ENCODE measurements at regions of chr6 and their contacts with region 1.

Region 1: GRCh38 chr6:31769684-31770371 is 7.3 kb downstream of the VWA7 start:
- DNase-seq: peak; percentile 88
- ATAC-seq: peak; percentile 88
- H3K4me3 Mint-ChIP-seq: no peak overlapping the region
- H3K27ac Mint-ChIP-seq: peak overlapping the region; percentile 60
- H3K4me1 Mint-ChIP-seq: peaks cover 49% of the 10 kb centered on the region
- H3K27me3 Mint-ChIP-seq: no peaks in the 10 kb centered on the region

Region 2: GRCh38 chr6:31729515-31729978 is 40.3 kb before region 1 on chr6:
- CTCF ChIA-PET with region 1: interaction called, 118 read pairs
- POLR2A ChIA-PET with region 1: interaction called, 5 read pairs
- DNase-seq: peak; percentile 88
- ATAC-seq: peak; percentile 67
- H3K4me3 Mint-ChIP-seq: peak overlapping the region; percentile 95
- H3K27ac Mint-ChIP-seq: peak overlapping the region; percentile 90
- H3K4me1 Mint-ChIP-seq: peaks cover 81% of the 10 kb centered on the region
- H3K27me3 Mint-ChIP-seq: no peaks in the 10 kb centered on the region

Region 3: DNA sequence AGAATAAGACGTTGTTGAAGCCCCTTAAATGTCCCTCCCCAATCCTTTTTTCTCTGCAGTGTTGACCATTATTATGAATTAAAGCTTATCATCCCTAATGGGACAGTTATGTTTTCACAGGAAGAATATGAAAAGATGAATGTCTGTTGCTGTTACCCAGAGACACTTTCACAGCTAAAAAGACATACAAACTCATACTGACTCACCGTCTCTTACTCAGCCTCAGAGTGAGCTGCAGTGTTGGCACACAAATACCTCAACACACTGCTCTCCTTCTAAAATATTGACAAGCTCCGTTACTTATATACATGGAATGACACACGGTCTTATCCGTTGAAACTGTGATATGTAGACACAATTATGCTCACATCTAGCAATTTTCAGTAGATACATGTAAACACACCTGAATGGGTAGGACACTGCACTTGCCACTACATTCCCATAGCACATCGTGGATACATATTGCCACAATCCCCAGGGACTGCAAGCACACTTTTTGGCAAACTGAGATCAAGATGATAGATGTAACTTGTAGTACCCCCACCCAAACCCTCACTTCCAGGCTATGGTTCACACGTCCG is 17.0 kb before region 1 on chr6:
- CTCF ChIA-PET with region 1: interaction called, 25 read pairs
- POLR2A ChIA-PET with region 1: interaction called, 4 read pairs
- DNase-seq: no peak
- ATAC-seq: no peak
- H3K4me3 Mint-ChIP-seq: no peak overlapping the region
- H3K27ac Mint-ChIP-seq: no peak overlapping the region
- H3K4me1 Mint-ChIP-seq: no peaks in the 10 kb centered on the region
- H3K27me3 Mint-ChIP-seq: no peaks in the 10 kb centered on the region

Region 4: DNA sequence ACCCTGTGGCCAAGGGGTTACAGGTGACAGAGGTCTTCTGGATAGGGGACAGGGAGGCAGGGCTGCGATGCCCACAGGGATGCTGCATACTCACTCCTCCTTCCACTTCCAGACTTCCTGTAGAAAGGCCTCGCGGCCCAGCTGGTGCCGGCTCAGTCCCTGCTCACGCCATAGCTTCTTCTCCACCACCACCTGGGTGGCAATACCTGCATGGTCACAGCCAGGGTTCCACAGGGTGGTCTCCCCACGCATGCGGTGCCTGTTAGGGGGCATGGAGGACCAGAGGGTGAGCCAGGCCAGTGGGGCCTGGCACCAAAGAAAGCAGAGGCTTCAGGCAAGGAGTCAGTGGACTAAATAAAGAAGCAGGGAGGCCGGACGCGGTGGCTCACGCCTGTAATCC is 15.6 kb after region 1 on chr6:
- CTCF ChIA-PET with region 1: interaction called, 21 read pairs
- POLR2A ChIA-PET with region 1: interaction called, 3 read pairs
- DNase-seq: no peak
- ATAC-seq: no peak
- H3K4me3 Mint-ChIP-seq: no peak overlapping the region
- H3K27ac Mint-ChIP-seq: no peak overlapping the region
- H3K4me1 Mint-ChIP-seq: no peaks in the 10 kb centered on the region
- H3K27me3 Mint-ChIP-seq: no peaks in the 10 kb centered on the region

Region 5: GRCh38 chr6:31795616-31796298 is 25.9 kb after region 1 on chr6 and contains the start of gene VARS1:
- CTCF ChIA-PET with region 1: interaction called, 17 read pairs
- POLR2A ChIA-PET with region 1: interaction called, 4 read pairs
- DNase-seq: peak; percentile 87
- ATAC-seq: peak; percentile 88
- H3K4me3 Mint-ChIP-seq: peak within 1 kb of the TSS; percentile 97
- H3K27ac Mint-ChIP-seq: peak within 1 kb of the TSS; percentile 98
- H3K4me1 Mint-ChIP-seq: peaks cover 56% of the 10 kb centered on the region
- H3K27me3 Mint-ChIP-seq: no peaks in the 10 kb centered on the region
- total RNA-seq, gene VARS1: 114 to 115 TPM

Region 6: DNA sequence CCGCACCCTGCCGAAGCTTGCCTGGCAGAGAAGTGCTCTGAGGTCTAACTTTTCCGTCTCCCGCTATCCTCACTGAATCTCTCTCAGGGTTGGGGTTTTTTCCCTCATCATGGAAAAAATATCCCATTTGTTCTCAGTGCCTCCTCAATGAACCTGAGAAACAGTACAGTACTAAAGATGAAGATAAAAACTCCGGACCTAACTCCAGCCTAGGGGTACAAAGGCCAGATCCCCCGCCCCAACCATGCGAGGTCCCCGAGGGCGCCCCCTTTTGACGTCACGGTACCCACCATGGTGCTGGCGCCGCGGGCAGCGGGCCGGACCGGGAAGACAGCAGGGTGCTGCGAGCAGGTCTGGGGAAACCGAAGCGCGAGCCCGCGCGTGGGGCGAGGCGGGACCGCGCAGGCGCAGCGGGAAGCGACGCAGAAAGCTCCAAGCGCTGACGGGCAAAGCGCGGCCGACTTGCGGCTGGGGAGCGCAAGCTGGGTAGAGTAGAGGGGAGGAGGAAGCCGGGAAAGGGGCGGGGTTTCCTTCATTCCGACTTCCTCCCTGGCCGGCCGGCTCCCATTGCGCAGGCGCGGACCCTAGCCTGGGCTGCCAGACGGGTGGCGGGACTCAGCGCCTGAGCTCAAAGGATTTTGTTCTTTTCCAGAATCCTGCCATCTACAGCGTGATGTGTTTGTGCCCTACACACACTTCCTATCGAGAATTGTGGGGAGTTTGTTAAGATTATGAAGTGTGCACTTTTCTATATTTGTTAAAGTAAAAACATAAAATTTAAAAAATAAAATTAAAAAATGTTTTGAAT is 36.8 kb after region 1 on chr6 and contains the start of gene LSM2:
- CTCF ChIA-PET with region 1: interaction called, 11 read pairs
- POLR2A ChIA-PET with region 1: interaction called, 4 read pairs
- DNase-seq: peak; percentile 98
- ATAC-seq: peak; percentile 98
- H3K4me3 Mint-ChIP-seq: peak within 1 kb of the TSS; percentile 97
- H3K27ac Mint-ChIP-seq: peak within 1 kb of the TSS; percentile 91
- H3K4me1 Mint-ChIP-seq: peaks cover 33% of the 10 kb centered on the region
- H3K27me3 Mint-ChIP-seq: no peaks in the 10 kb centered on the region
- total RNA-seq, gene LSM2: 123 to 128 TPM

Region 7: GRCh38 chr6:31815025-31815838 is 45.4 kb after region 1 on chr6 and contains the starts of genes HSPA1A and HSPA1L:
- CTCF ChIA-PET with region 1: interaction called, 13 read pairs
- POLR2A ChIA-PET with region 1: no interaction called
- DNase-seq: peak; percentile 82
- ATAC-seq: peak; percentile 29
- H3K4me3 Mint-ChIP-seq: peak within 1 kb of the TSS; percentile 89
- H3K27ac Mint-ChIP-seq: peak within 1 kb of the TSS; percentile 90
- H3K4me1 Mint-ChIP-seq: peaks cover 47% of the 10 kb centered on the region
- H3K27me3 Mint-ChIP-seq: no peaks in the 10 kb centered on the region
- total RNA-seq, gene HSPA1A: 75.6 to 75.7 TPM
- total RNA-seq, gene HSPA1L: 3.0 to 3.1 TPM

Region 8: DNA sequence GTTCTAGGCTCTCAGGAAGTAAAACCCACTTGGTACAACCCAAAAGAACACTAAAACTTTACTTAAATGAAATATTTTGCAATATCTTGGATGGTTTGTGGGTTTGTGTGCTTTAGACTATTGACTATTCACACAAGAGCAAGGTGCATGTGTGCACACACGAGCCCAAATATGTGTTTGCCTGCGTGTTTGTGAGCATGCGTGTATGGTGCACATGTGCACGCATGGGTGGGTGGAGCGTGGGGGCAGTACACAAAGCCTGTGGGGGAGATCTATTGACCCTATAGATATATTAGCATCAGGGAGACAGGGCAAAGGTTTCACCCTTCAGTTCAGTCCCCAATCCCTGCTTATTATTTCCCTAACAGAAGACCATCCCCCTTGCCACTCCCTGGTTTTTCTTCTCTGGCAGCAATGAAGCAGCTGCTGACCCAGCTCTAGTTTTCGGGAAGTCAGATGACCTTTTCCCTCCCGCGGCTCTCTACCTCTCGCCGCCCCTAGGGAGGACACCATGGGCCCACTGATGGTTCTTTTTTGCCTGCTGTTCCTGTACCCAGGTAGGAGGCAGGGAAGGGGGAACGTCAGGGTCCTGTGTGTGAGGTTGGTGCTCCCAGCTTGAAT is 157.5 kb after region 1 on chr6 and contains the start of gene C2:
- CTCF ChIA-PET with region 1: no interaction called
- POLR2A ChIA-PET with region 1: no interaction called
- DNase-seq: no peak
- ATAC-seq: no peak
- H3K4me3 Mint-ChIP-seq: no peak within 1 kb of the TSS
- H3K27ac Mint-ChIP-seq: no peak within 1 kb of the TSS
- H3K4me1 Mint-ChIP-seq: no peaks in the 10 kb centered on the region
- H3K27me3 Mint-ChIP-seq: peaks cover 2% of the 10 kb centered on the region
- total RNA-seq, gene C2: 0.26 to 0.87 TPM

Region 9: GRCh38 chr6:32133786-32134185 is 364.0 kb after region 1 on chr6:
- CTCF ChIA-PET with region 1: no interaction called
- POLR2A ChIA-PET with region 1: no interaction called
- DNase-seq: no peak
- ATAC-seq: no peak
- H3K4me3 Mint-ChIP-seq: no peak overlapping the region
- H3K27ac Mint-ChIP-seq: no peak overlapping the region
- H3K4me1 Mint-ChIP-seq: peaks cover 14% of the 10 kb centered on the region
- H3K27me3 Mint-ChIP-seq: peaks cover 9% of the 10 kb centered on the region

Measured in activated CD8-positive, alpha-beta T cell treated with anti-CD3 and anti-CD28 coated beads, Interleukin-2, amount 10 ng/mL, durations not matched to agents 7 days and 5 days (primary cell).